Naive thymus-derived CD4-positive, alpha-beta T cell (primary cell): ENCODE measurements at regions of chr9 and their contacts with region 1.

Region 1: DNA sequence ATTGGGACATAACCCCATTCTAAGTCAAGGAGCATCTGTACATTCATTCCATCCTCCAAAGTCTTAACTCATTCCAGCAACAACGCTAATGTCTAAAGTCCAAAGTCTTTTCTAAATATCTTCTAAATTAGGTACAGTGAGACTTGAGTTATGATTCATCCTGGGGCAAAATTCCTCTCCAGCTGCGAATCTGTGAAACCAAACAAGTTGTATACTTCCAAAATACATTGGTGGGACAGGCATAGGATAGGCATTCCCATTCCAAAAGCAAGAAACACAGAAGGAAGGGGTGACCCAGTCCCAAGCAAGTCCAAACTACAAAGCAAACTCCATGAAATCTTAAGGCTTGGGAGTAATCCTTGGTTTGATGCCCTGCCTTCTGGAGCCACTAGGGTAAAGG is 97.6 kb upstream of the FANCC start:
- DNase-seq: no peak
- ATAC-seq: no peak
- H3K4me3 ChIP-seq: no peak overlapping the region
- H3K4me3 Mint-ChIP-seq: no peak overlapping the region
- H3K27ac ChIP-seq: no peak overlapping the region
- H3K27ac Mint-ChIP-seq: no peak overlapping the region
- H3K4me1 ChIP-seq: no peaks in the 10 kb centered on the region
- H3K4me1 Mint-ChIP-seq: no peaks in the 10 kb centered on the region
- H3K27me3 ChIP-seq: no peaks in the 10 kb centered on the region
- H3K27me3 Mint-ChIP-seq: peaks cover 0 to 6% (median 4%) of the 10 kb centered on the region in 5 donors

Region 2: GRCh38 chr9:95447660-95448420 is 32.7 kb after region 1 on chr9:
- CTCF ChIA-PET with region 1: no interaction called
- POLR2A ChIA-PET with region 1: no interaction called
- intact Hi-C with region 1: loop called in 1 of 2 experiments (anchors 1 kb)
- DNase-seq: no peak
- ATAC-seq: no peak
- H3K4me3 ChIP-seq: no peak overlapping the region
- H3K4me3 Mint-ChIP-seq: no peak overlapping the region
- H3K27ac ChIP-seq: no peak overlapping the region
- H3K27ac Mint-ChIP-seq: no peak overlapping the region
- H3K4me1 ChIP-seq: no peaks in the 10 kb centered on the region
- H3K4me1 Mint-ChIP-seq: peaks cover 0 to 9% (median 0%) of the 10 kb centered on the region in 7 donors
- H3K27me3 ChIP-seq: no peaks in the 10 kb centered on the region
- H3K27me3 Mint-ChIP-seq: peaks cover 0 to 5% (median 0%) of the 10 kb centered on the region in 5 donors